ENCODE measurements at regions of chr21 and their contacts with region 1.

Region 1: DNA sequence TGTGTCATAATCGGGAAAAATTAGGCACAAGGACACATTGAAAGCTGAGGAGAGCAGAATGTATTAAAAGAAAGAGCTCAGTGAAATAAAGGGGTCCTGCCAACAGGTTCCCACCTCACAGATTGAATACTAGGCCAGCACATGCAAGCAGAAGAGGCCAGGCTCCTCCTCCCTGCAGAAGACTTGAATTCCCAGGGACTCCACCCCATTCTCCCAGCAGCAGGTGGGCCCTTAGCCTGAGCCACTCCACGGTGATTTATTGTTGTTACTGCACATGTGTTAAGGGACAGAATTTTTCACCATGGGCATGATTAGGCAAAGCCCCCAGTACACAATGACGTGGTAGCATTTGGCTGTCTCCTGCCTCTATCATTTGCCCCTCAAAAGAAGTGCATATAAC is 1844.7 kb downstream of the NCAM2 start:
- DNase-seq: no peak
- ATAC-seq: no peak
- H3K4me3 ChIP-seq: no peak overlapping the region
- H3K4me3 Mint-ChIP-seq: no peak overlapping the region
- H3K27ac ChIP-seq: no peak overlapping the region
- H3K27ac Mint-ChIP-seq: no peak overlapping the region
- H3K4me1 ChIP-seq: no peaks in the 10 kb centered on the region
- H3K4me1 Mint-ChIP-seq: no peaks in the 10 kb centered on the region
- H3K27me3 ChIP-seq: no peaks in the 10 kb centered on the region
- H3K27me3 Mint-ChIP-seq: no peaks in the 10 kb centered on the region
- CTCF ChIP-seq: no peak

Region 2: DNA sequence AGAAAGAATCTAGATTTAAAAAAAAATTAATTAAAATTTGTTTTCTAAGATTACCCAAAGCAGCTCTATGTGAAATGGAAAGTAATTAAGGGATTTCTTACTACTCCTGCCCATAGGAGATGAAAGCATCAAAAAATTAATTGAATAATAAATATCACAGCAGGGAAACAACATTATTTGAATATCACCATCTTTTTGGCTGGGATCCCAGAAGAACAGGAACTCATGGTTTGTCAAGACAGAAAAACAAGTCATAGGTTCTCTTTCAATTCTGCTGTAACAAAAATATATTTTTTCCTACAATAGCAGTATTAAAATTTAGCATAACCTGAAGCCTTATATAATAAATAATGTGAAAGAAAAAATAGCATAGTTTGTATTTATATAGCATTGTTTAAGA is 131.2 kb before region 1 on chr21:
- CTCF ChIA-PET with region 1: no interaction called
- POLR2A ChIA-PET with region 1: no interaction called
- intact Hi-C with region 1: loop called (anchors 5 kb)
- DNase-seq: no peak
- ATAC-seq: no peak
- H3K4me3 ChIP-seq: no peak overlapping the region
- H3K4me3 Mint-ChIP-seq: no peak overlapping the region
- H3K27ac ChIP-seq: no peak overlapping the region
- H3K27ac Mint-ChIP-seq: no peak overlapping the region
- H3K4me1 ChIP-seq: no peaks in the 10 kb centered on the region
- H3K4me1 Mint-ChIP-seq: no peaks in the 10 kb centered on the region
- H3K27me3 ChIP-seq: no peaks in the 10 kb centered on the region
- H3K27me3 Mint-ChIP-seq: no peaks in the 10 kb centered on the region
- CTCF ChIP-seq: no peak

Measured in B cell (primary cell).